IMR-90 (cell line): ENCODE measurements at regions of chr1 and their contacts with region 1.

Region 1: DNA sequence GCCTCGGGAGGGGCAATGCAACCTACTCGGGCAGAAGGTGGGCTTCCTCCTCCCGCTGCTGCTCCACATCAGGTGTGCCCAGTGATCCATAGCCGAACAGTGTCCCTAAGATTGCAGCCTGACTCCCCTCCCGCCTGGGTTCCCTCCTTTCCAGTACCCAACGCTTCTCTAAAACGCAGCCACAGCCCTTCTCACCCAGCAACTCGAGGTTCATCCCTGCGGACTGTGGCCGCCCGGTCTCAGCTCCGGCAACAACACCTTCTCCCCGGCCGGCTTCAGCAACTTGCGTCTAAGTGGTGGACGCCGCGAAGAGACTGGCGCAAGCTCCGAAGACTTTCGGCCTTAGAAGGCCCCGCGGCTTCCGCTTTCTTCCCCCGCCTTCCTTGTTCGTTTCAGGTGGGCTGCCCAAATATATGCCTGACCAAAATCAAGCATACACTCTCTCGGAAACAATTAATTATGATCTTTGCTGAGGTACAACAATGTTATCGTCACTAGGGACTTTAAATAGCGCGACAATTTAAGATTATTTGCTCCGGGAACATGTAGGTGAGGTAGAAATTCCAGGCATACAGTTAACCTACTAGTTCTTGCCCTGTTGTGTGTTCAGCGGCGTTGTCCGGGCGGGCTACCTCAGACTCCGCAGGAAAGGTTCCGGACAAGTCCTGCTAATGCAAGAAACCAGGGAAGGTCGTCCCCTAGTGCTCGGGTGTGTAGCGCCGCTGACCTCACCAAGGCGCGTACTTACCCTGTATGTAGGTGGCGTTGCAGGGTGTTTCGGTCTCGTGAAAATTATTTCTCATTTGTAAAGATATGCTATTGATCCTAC is at the start of gene RBBP5:
- DNase-seq: peak; percentile 98
- ATAC-seq: peak; percentile 99
- H3K4me3 ChIP-seq: peak within 1 kb of the TSS; percentile 89
- H3K27ac ChIP-seq: peak within 1 kb of the TSS; percentile 88
- H3K4me1 ChIP-seq: peaks cover 2% of the 10 kb centered on the region; the same call in 1 of the 2 replicates
- H3K27me3 ChIP-seq: no peaks in the 10 kb centered on the region
- CTCF ChIP-seq: peak; percentile 89
- POLR2A ChIP-seq: peak; percentile 95
- RAD21 ChIP-seq: peak; percentile 61
- total RNA-seq, gene RBBP5: 33.9 and 37.5 TPM in 2 replicates

Region 2: DNA sequence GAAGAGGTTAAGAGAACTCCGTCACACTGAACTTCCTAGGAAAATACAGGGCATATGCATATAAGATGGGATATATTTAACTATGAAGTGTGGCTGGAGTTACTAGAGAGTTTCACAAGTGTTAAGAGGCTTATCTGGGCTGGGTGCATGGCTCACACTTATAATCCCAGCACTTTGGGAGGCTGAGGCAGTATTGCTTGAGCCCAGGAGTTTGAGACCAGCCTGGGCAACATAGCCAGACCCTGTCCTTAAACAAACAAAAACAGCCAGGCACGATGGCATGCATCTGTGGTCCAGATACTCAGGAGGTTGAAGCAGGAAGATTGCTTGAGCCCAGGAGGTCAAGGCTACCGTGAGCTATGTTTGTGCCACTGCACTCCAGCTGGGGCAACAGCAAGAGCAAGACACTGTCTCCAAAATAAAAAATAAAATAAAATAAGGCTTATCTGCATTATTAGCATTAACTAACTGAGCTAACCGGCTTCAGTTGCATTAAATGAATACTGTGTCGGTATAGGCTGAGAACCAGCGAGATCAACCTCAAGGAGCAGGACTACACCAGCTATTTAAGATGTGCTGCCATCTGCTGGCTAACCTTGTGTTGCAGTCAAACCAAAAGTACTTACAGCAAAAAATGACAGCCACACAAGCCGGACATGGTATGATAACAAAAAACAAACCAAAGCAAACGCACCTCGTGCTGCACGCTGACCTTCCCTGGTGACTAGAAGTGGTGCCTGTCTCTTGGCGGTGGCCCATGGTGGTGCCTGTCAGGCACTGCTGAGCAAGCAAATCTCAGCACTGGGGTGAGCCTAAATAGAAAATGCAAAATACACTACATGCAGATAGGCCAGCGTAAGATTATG is 19.6 kb after region 1 on chr1:
- CTCF ChIA-PET with region 1: interaction called, 6 read pairs
- POLR2A ChIA-PET with region 1: no interaction called
- dilution Hi-C with region 1: no loop called
- in situ Hi-C with region 1: no loop called
- intact Hi-C with region 1: loop called (anchors 1 kb)
- DNase-seq: peak; percentile 86
- ATAC-seq: peak; percentile 79
- H3K4me3 ChIP-seq: no peak overlapping the region
- H3K27ac ChIP-seq: no peak overlapping the region
- H3K4me1 ChIP-seq: peaks cover 16% of the 10 kb centered on the region
- H3K27me3 ChIP-seq: no peaks in the 10 kb centered on the region
- CTCF ChIP-seq: peak; percentile 73
- POLR2A ChIP-seq: no peak
- RAD21 ChIP-seq: peak; percentile 71

Region 3: DNA sequence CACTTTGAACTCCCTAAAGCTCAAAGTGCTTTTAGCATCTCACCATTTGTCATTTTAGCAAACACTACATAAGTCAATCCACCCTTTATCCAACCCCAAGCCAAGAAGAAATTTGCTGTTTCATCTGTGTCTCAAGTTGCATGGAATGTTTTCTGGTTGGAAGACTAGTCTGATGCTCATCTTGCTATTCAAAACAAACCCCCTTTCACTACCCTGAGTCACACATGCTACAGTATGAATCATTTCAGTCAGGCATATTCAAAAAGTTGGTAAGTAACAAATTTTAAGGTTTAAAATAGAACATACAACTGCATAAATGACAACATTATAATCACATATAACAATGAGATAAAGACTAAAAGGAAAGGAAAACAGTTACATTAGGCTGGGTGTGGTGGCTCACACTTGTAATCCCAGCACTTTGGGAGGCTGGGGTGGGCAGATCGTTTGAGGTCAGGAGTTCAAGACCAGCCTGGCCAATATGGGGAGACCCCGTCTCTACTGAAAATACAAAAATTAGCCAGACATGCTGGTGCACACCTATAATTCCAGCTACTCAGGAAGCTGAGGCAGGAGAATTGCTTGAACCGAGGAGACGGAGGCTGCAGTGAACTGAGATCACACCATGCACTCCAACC is 51.0 kb after region 1 on chr1:
- CTCF ChIA-PET with region 1: interaction called, 5 read pairs
- POLR2A ChIA-PET with region 1: no interaction called
- dilution Hi-C with region 1: no loop called
- in situ Hi-C with region 1: no loop called
- intact Hi-C with region 1: loop called (anchors 1 kb)
- DNase-seq: peak; percentile 99
- ATAC-seq: peak; percentile 77
- H3K4me3 ChIP-seq: no peak overlapping the region
- H3K27ac ChIP-seq: peak overlapping the region; percentile 90
- H3K4me1 ChIP-seq: peaks cover 8% of the 10 kb centered on the region
- H3K27me3 ChIP-seq: no peaks in the 10 kb centered on the region
- CTCF ChIP-seq: no peak
- POLR2A ChIP-seq: no peak
- RAD21 ChIP-seq: no peak